Upper lobe of right lung (tissue), 1 donor: ENCODE measurements at regions of chr5 and their contacts with region 1.

Region 1: DNA sequence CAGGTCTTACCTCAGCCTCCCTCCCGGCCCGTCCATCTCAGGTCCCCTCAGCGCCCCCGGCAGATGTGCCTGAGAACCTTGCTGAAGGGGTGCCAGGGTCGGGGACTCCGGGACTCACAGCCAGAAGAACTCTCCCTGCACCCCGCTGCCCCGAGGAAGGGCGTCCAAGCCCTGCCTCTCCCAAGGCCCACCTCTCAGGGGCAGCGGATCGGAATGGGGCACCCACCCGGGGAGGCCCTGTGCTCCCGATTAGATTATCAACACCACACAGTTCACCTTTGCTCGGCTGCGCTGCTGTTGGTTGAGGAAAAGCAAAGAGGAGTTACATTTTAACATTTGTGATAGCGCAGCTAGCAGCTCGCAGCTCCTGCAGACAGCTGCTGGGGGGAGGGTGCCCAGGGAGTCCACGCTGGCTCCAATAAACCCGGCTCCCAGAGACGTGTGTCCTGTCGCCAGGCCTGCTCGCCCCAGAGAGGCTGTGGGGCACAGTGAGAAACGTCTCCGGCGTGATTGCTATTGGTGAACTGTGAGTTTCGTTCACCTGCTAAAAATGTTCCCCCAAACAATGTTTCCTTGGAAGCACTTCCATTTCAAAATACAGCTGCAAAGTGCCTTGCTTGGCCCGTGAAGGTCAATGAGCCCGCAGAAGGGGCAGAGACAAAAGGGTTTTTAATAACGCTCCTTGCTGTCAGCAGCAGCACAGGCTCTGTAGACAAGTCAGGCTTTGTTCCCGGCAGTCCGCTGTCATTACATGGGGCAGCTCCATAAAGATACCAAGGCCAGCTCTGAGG is 18.6 kb upstream of the SLC6A19 start:
- DNase-seq: no peak
- ATAC-seq: no peak
- H3K4me3 ChIP-seq: no peak overlapping the region
- H3K27ac ChIP-seq: no peak overlapping the region
- H3K4me1 ChIP-seq: peaks cover 12% of the 10 kb centered on the region
- H3K27me3 ChIP-seq: no peaks in the 10 kb centered on the region
- CTCF ChIP-seq: no peak

Region 2: DNA sequence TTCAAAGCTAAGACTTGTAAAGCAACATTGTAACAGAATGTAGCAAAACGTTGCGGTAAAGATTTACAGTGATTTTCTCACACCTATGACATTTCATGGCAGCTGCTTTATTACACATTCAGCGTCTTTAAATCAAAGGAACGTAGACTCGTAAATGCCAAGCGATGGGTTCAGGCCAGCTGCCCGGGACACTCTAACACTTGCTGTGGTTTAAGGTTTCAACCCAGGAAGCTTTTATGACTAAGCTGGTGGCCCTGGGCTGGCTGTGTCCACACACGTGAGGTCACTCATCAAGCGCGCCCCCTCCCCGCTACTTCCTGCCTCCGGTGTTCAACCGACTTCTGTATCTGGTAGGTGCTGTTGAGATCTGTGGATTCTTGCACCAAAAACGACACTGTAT is 44.8 kb after region 1 on chr5:
- intact Hi-C with region 1: no loop called
- DNase-seq: no peak
- ATAC-seq: peak; percentile 40
- H3K4me3 ChIP-seq: no peak overlapping the region
- H3K27ac ChIP-seq: no peak overlapping the region
- H3K4me1 ChIP-seq: no peaks in the 10 kb centered on the region
- H3K27me3 ChIP-seq: no peaks in the 10 kb centered on the region
- CTCF ChIP-seq: no peak

Region 3: GRCh38 chr5:1385395-1386273 is 202.8 kb after region 1 on chr5:
- intact Hi-C with region 1: no loop called
- DNase-seq: peak; percentile 97
- ATAC-seq: peak; percentile 96
- H3K4me3 ChIP-seq: peak overlapping the region; percentile 70
- H3K27ac ChIP-seq: peak overlapping the region; percentile 92
- H3K4me1 ChIP-seq: peaks cover 14% of the 10 kb centered on the region
- H3K27me3 ChIP-seq: no peaks in the 10 kb centered on the region
- CTCF ChIP-seq: no peak

Region 4: DNA sequence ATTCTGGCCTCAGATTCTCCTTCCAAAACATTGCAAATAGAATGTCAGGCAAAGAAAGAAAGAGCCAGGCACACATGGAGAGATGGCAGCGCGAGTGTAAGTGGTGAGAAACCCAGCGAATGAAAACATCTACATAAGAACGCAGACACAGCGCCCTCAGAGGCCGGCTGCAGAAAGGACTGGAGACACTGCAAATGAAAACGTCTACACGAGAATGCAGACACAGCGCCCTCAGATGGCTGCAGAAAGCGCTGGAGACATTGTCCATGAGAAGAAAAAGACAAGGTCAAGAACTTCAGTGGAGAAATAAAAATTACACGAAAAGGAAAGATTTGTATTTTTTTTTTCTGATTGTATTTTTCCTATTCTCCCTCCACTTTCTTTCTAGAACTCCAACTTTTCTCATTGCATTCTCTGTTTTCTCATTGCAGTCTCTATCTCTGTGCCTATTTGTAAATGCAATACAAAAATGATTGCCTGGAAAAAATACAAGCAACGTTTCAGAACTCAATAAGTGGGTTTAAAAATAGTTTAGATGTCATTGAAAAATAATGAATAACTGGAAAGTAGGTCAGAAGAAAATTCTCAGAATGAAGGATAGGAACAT is 458.8 kb after region 1 on chr5:
- intact Hi-C with region 1: loop called (anchors 10 kb)
- DNase-seq: peak; percentile 85
- ATAC-seq: peak; percentile 88
- H3K4me3 ChIP-seq: no peak overlapping the region
- H3K27ac ChIP-seq: no peak overlapping the region
- H3K4me1 ChIP-seq: peaks cover 4% of the 10 kb centered on the region
- H3K27me3 ChIP-seq: peaks cover 21% of the 10 kb centered on the region
- CTCF ChIP-seq: peak; percentile 86